HepG2 (cell line): ENCODE measurements at regions of chr1 and their contacts with region 1.

Region 1: DNA sequence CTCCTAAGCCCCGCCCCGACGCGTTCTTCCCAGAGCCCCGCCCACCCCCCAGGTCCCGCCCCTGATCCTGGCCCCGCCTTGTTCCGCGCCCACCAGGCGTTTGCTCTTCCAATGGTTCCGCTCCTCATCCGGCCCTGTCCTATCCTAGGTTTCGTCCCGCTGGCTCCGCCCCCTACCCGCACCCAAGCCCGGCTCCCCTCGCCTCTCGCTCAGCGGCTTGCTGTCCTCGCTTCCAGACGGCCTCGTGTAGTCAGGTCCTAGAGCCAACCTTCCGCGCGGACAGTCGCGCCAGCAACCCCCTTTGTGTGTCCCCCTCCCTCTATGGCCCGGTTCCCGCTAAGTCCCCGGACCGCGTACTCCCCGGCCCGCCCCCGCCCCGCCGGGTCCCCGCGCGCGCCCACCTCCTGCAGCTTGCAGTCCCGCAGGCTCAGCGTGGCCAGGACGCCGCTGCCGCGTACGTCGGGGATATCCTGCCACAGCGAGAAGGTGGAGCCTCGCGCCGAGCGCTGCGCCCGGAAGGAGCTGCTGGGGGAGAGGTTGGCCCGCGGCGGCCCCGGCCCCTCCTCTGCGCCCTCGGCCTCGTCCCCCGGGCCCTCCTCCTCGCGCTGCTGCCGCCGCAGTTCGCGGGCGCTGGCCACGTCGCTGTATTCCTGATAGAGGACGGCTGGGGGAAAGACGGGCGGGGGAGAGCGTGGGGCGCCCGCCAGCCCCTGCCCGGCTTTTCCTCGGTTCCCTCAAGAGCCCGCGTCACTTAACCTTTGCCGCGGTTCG is 5.7 kb downstream of the ARHGEF19 start:
- DNase-seq: peak; percentile 93
- ATAC-seq: peak; percentile 91
- H3K4me3 ChIP-seq: peak overlapping the region; percentile 40 to 82 (median 61); a peak in 5 of 6 replicates
- H3K27ac ChIP-seq: peak overlapping the region; percentile 81
- H3K4me1 ChIP-seq: peaks cover 42% of the 10 kb centered on the region
- H3K27me3 ChIP-seq: peaks cover 9 to 36% of the 10 kb centered on the region in 2 experiments; a peak in 3 of 5 replicates
- CTCF ChIP-seq: no peak
- EP300 ChIP-seq: no peak
- POLR2A ChIP-seq: peak; percentile 74 to 94; a peak in 3 of 4 replicates
- RAD21 ChIP-seq: no peak

Region 2: GRCh38 chr1:16217061-16217785 is 10.5 kb after region 1 on chr1:
- CTCF ChIA-PET with region 1: no interaction called
- POLR2A ChIA-PET with region 1: interaction called, 19 read pairs
- in situ Hi-C with region 1: no loop called
- intact Hi-C with region 1: no loop called
- DNase-seq: peak; percentile 88
- ATAC-seq: peak; percentile 96
- H3K4me3 ChIP-seq: peak overlapping the region; percentile 53 to 78 (median 56)
- H3K27ac ChIP-seq: no peak overlapping the region
- H3K4me1 ChIP-seq: peaks cover 30% of the 10 kb centered on the region
- H3K27me3 ChIP-seq: 0 out of 5 replicates have a peak, but pooled peaks cover 0 to 4% of the 10 kb centered on the region in 2 experiments
- CTCF ChIP-seq: no peak
- EP300 ChIP-seq: no peak
- POLR2A ChIP-seq: no peak
- RAD21 ChIP-seq: no peak

Region 3: GRCh38 chr1:16236511-16237342 is 30.0 kb after region 1 on chr1 and contains the start of gene CPLANE2:
- CTCF ChIA-PET with region 1: interaction called, 3 read pairs
- POLR2A ChIA-PET with region 1: interaction called, 7 read pairs
- in situ Hi-C with region 1: loop called (anchors 5 kb)
- intact Hi-C with region 1: loop called (anchors 2 kb)
- DNase-seq: peak; percentile 79
- ATAC-seq: peak; percentile 85
- H3K4me3 ChIP-seq: peak within 1 kb of the TSS; percentile 66 to 79 (median 67)
- H3K27ac ChIP-seq: peak within 1 kb of the TSS; percentile 31
- H3K4me1 ChIP-seq: peaks cover 50% of the 10 kb centered on the region
- H3K27me3 ChIP-seq: no peaks in the 10 kb centered on the region
- CTCF ChIP-seq: peak; percentile 40
- EP300 ChIP-seq: no peak
- POLR2A ChIP-seq: peak; percentile 48 to 63; a peak in 3 of 4 replicates
- RAD21 ChIP-seq: no peak
- total RNA-seq, gene CPLANE2: 0.98 and 1.6 TPM in 2 replicates

Region 4: GRCh38 chr1:16243936-16244649 is 37.4 kb after region 1 on chr1:
- CTCF ChIA-PET with region 1: interaction called, 14 read pairs
- POLR2A ChIA-PET with region 1: interaction called, 3 read pairs
- in situ Hi-C with region 1: loop called (anchors 5 kb)
- intact Hi-C with region 1: loop called (anchors 1 kb)
- DNase-seq: peak; percentile 68
- ATAC-seq: peak; percentile 64
- H3K4me3 ChIP-seq: no peak overlapping the region
- H3K27ac ChIP-seq: no peak overlapping the region
- H3K4me1 ChIP-seq: peaks cover 30% of the 10 kb centered on the region
- H3K27me3 ChIP-seq: no peaks in the 10 kb centered on the region
- CTCF ChIP-seq: peak; percentile 88
- EP300 ChIP-seq: no peak
- POLR2A ChIP-seq: no peak
- RAD21 ChIP-seq: peak; percentile 81

Region 5: GRCh38 chr1:17229383-17229782 is 1022.7 kb after region 1 on chr1:
- CTCF ChIA-PET with region 1: no interaction called
- POLR2A ChIA-PET with region 1: no interaction called
- in situ Hi-C with region 1: no loop called
- intact Hi-C with region 1: no loop called
- DNase-seq: no peak
- ATAC-seq: no peak
- H3K4me3 ChIP-seq: no peak overlapping the region
- H3K27ac ChIP-seq: no peak overlapping the region
- H3K4me1 ChIP-seq: no peaks in the 10 kb centered on the region
- H3K27me3 ChIP-seq: peaks cover 3 to 16% of the 10 kb centered on the region in 2 experiments; a peak in 3 of 5 replicates
- CTCF ChIP-seq: no peak
- EP300 ChIP-seq: no peak
- POLR2A ChIP-seq: no peak
- RAD21 ChIP-seq: no peak